Ovary (tissue), 10 donors: ENCODE measurements at regions of chr6 and their contacts with region 1.

Region 1: GRCh38 chr6:87393022-87393622 is 14.7 kb upstream of the CFAP206 start:
- DNase-seq: no peak
- H3K4me3 ChIP-seq: no peak overlapping the region
- H3K27ac ChIP-seq: no peak overlapping the region
- H3K4me1 ChIP-seq: no peaks in the 10 kb centered on the region
- H3K27me3 ChIP-seq: no peaks in the 10 kb centered on the region
- CTCF ChIP-seq: peak; percentile 28 to 69 (median 62)
- EP300 ChIP-seq: no peak
- POLR2A ChIP-seq: no peak

Region 2: GRCh38 chr6:87366072-87366827 is 26.9 kb before region 1 on chr6:
- intact Hi-C with region 1: no loop called
- DNase-seq: no peak
- H3K4me3 ChIP-seq: no peak overlapping the region
- H3K27ac ChIP-seq: no peak overlapping the region
- H3K4me1 ChIP-seq: no peaks in the 10 kb centered on the region
- H3K27me3 ChIP-seq: no peaks in the 10 kb centered on the region
- CTCF ChIP-seq: no peak
- EP300 ChIP-seq: no peak
- POLR2A ChIP-seq: no peak

Region 3: DNA sequence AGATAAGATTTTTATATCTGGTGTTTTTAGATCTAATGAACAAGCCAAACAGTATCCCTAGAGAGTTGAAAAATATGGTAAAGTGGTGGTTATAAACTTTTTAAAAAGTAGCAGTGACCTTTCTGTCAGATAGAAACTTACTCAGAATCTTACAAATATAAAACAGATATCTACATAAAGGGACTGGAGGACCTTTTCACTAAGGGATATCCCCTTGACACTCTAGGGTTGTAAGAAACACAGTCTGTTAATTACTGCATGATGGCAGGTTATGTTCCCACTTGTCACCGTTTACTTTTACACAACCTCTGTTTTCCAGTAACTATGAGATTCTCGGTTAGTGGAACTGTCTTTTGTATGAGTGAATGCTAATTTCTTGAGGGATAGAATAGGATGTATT is 26.1 kb after region 1 on chr6:
- intact Hi-C with region 1: loop called in 1 of 4 experiments (anchors 1 kb)
- DNase-seq: no peak
- H3K4me3 ChIP-seq: no peak overlapping the region
- H3K27ac ChIP-seq: no peak overlapping the region
- H3K4me1 ChIP-seq: no peaks in the 10 kb centered on the region
- H3K27me3 ChIP-seq: no peaks in the 10 kb centered on the region
- CTCF ChIP-seq: no peak
- EP300 ChIP-seq: no peak
- POLR2A ChIP-seq: no peak

Region 4: GRCh38 chr6:87714093-87714809 is 321.1 kb after region 1 on chr6:
- intact Hi-C with region 1: no loop called
- DNase-seq: no peak
- H3K4me3 ChIP-seq: no peak overlapping the region
- H3K27ac ChIP-seq: no peak overlapping the region
- H3K4me1 ChIP-seq: no peaks in the 10 kb centered on the region
- H3K27me3 ChIP-seq: no peaks in the 10 kb centered on the region
- CTCF ChIP-seq: no peak
- EP300 ChIP-seq: no peak
- POLR2A ChIP-seq: no peak

Region 5: GRCh38 chr6:88870717-88871330 is 1477.7 kb after region 1 on chr6:
- intact Hi-C with region 1: loop called in 2 of 4 experiments (anchors 5 to 10 kb)
- DNase-seq: peak in 3 of 5 donors; percentile 10 to 33 (median 22)
- H3K4me3 ChIP-seq: no peak overlapping the region
- H3K27ac ChIP-seq: no peak overlapping the region
- H3K4me1 ChIP-seq: no peaks in the 10 kb centered on the region
- H3K27me3 ChIP-seq: no peaks in the 10 kb centered on the region
- CTCF ChIP-seq: peak; percentile 40 to 62 (median 57)
- EP300 ChIP-seq: no peak
- POLR2A ChIP-seq: no peak